Dendritic cell treated with granulocyte-macrophage colony-stimulating factor and Interleukin-4, amounts not matched to agents 40 ng/mL and 50 ng/mL, for 4 days (primary cell): ENCODE measurements at regions of chrX and their contacts with region 1.

Region 1: GRCh38 chrX:149470955-149471354 is 34.2 kb downstream of the IDS start:
- H3K4me3 Mint-ChIP-seq: no peak overlapping the region
- H3K27ac Mint-ChIP-seq: no peak overlapping the region
- H3K4me1 Mint-ChIP-seq: no peaks in the 10 kb centered on the region
- H3K27me3 Mint-ChIP-seq: peaks cover 4% of the 10 kb centered on the region

Region 2: DNA sequence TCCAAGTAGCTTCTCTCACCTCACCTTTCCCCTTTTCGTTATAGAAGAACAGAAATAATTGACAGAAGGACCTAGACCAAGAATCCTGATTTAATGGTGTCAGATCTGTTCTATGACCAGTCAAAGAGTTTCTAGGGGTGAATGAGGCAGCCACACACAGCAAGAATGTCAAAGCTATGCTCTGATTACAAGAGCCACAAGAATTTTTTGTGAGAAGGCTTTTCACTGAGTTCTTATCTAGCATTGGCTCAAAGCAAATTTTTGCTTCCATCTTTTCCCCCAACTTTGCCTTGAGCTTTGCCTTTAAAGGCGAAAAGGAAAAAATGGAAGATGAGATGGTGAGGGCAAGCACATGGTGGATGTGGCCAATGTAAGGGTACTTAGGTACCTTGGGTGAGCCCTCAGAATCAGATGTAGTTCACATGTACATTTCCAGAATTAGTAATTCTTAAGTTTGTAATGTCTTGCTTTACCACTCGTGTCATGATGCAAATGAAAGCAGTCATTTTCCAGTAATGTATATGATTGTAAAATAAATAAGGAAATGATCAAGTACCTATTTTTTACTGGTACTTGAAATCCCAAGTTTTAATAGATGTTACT is 1535.7 kb before region 1 on chrX:
- intact Hi-C with region 1: loop called (anchors 10 kb)
- H3K4me3 Mint-ChIP-seq: no peak overlapping the region
- H3K27ac Mint-ChIP-seq: no peak overlapping the region
- H3K4me1 Mint-ChIP-seq: no peaks in the 10 kb centered on the region
- H3K27me3 Mint-ChIP-seq: no peaks in the 10 kb centered on the region

Region 3: GRCh38 chrX:148049441-148049840 is 1421.5 kb before region 1 on chrX:
- intact Hi-C with region 1: loop called (anchors 2 kb)
- H3K4me3 Mint-ChIP-seq: no peak overlapping the region
- H3K27ac Mint-ChIP-seq: no peak overlapping the region
- H3K4me1 Mint-ChIP-seq: no peaks in the 10 kb centered on the region
- H3K27me3 Mint-ChIP-seq: no peaks in the 10 kb centered on the region